ENCODE measurements at regions of chr2 and their contacts with region 1.

Region 1: GRCh38 chr2:8681786-8682692 is at the start of gene ID2:
- DNase-seq: peak; percentile 99
- ATAC-seq: peak; percentile 73
- H3K4me3 Mint-ChIP-seq: peak within 1 kb of the TSS; percentile 98
- H3K27ac Mint-ChIP-seq: peak within 1 kb of the TSS; percentile 97
- H3K4me1 Mint-ChIP-seq: peaks cover 34% of the 10 kb centered on the region
- H3K27me3 Mint-ChIP-seq: peaks cover 10% of the 10 kb centered on the region
- total RNA-seq, gene ID2: 171 to 213 TPM

Region 2: GRCh38 chr2:7427293-7428060 is 1254.6 kb before region 1 on chr2:
- CTCF ChIA-PET with region 1: interaction called, 4 read pairs
- POLR2A ChIA-PET with region 1: no interaction called
- intact Hi-C with region 1: loop called (anchors 1 to 2 kb)
- DNase-seq: no peak
- ATAC-seq: no peak
- H3K4me3 Mint-ChIP-seq: no peak overlapping the region
- H3K27ac Mint-ChIP-seq: peak overlapping the region; percentile 51
- H3K4me1 Mint-ChIP-seq: peaks cover 41% of the 10 kb centered on the region
- H3K27me3 Mint-ChIP-seq: peaks cover 9% of the 10 kb centered on the region

Region 3: GRCh38 chr2:7845332-7845731 is 836.7 kb before region 1 on chr2:
- CTCF ChIA-PET with region 1: no interaction called
- POLR2A ChIA-PET with region 1: interaction called, 7 read pairs
- intact Hi-C with region 1: loop called in 1 of 2 experiments (anchors 1 kb)
- DNase-seq: no peak
- ATAC-seq: no peak
- H3K4me3 Mint-ChIP-seq: no peak overlapping the region
- H3K27ac Mint-ChIP-seq: no peak overlapping the region
- H3K4me1 Mint-ChIP-seq: peaks cover 40% of the 10 kb centered on the region
- H3K27me3 Mint-ChIP-seq: peaks cover 6% of the 10 kb centered on the region

Region 4: DNA sequence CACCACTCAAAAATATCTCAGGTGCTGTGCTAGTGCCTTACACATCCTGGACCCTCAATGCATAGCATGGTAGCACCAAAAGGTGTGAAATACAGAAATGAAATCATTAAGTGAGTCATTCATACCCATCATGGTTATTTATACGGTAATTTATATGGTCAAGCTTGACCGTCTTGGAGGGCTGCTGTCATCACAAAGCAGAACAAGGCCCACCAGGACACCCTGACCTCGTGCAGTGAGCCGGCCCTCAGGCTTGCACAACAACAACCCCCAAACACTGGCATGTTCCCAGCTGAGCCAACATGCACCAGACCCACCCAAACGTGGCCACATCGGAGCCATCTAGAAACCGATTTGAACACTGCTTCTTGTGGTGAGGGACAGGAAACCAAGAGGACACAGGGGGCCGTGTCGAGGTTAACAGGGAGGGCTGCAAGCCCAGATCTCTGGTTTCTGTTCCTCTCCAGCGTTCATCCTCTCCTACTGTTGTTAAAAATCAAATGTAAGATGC is 378.7 kb before region 1 on chr2:
- CTCF ChIA-PET with region 1: no interaction called
- POLR2A ChIA-PET with region 1: no interaction called
- intact Hi-C with region 1: loop called (anchors 2 to 10 kb)
- DNase-seq: peak; percentile 53
- ATAC-seq: peak; percentile 7
- H3K4me3 Mint-ChIP-seq: no peak overlapping the region
- H3K27ac Mint-ChIP-seq: peak overlapping the region; percentile 63
- H3K4me1 Mint-ChIP-seq: peaks cover 51% of the 10 kb centered on the region
- H3K27me3 Mint-ChIP-seq: peaks cover 5% of the 10 kb centered on the region

Region 5: GRCh38 chr2:8544786-8545694 is 137.0 kb before region 1 on chr2:
- CTCF ChIA-PET with region 1: interaction called, 5 read pairs
- POLR2A ChIA-PET with region 1: interaction called, 103 read pairs
- intact Hi-C with region 1: loop called (anchors 1 kb)
- DNase-seq: peak; percentile 96
- ATAC-seq: peak; percentile 66
- H3K4me3 Mint-ChIP-seq: no peak overlapping the region
- H3K27ac Mint-ChIP-seq: peak overlapping the region; percentile 99
- H3K4me1 Mint-ChIP-seq: peaks cover 77% of the 10 kb centered on the region
- H3K27me3 Mint-ChIP-seq: no peaks in the 10 kb centered on the region

Region 6: DNA sequence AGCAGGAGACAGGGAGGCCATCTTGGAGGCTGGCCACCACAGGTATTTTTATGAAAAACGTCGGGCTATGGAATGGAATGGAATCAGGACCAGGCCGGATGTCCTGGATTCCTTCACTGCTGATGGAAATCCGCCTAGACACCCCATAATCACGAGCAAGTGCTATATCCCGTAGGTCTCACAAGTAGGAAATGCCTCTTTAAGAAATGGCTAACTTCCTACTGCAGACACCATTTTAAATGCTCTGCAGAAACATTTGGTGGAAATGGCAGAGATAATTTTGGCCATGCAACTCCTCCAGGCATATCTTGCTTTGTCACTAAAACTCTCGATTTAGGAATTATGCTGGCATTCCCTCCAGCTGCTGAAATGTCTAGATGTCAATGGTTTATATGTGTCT is 17.8 kb after region 1 on chr2:
- CTCF ChIA-PET with region 1: no interaction called
- POLR2A ChIA-PET with region 1: no interaction called
- intact Hi-C with region 1: no loop called
- DNase-seq: no peak
- ATAC-seq: no peak
- H3K4me3 Mint-ChIP-seq: no peak overlapping the region
- H3K27ac Mint-ChIP-seq: no peak overlapping the region
- H3K4me1 Mint-ChIP-seq: no peaks in the 10 kb centered on the region
- H3K27me3 Mint-ChIP-seq: no peaks in the 10 kb centered on the region

Region 7: GRCh38 chr2:8750221-8750620 is 68.2 kb after region 1 on chr2:
- CTCF ChIA-PET with region 1: no interaction called
- POLR2A ChIA-PET with region 1: no interaction called
- intact Hi-C with region 1: no loop called
- DNase-seq: no peak
- ATAC-seq: no peak
- H3K4me3 Mint-ChIP-seq: no peak overlapping the region
- H3K27ac Mint-ChIP-seq: no peak overlapping the region
- H3K4me1 Mint-ChIP-seq: peaks cover 2% of the 10 kb centered on the region
- H3K27me3 Mint-ChIP-seq: no peaks in the 10 kb centered on the region

Region 8: DNA sequence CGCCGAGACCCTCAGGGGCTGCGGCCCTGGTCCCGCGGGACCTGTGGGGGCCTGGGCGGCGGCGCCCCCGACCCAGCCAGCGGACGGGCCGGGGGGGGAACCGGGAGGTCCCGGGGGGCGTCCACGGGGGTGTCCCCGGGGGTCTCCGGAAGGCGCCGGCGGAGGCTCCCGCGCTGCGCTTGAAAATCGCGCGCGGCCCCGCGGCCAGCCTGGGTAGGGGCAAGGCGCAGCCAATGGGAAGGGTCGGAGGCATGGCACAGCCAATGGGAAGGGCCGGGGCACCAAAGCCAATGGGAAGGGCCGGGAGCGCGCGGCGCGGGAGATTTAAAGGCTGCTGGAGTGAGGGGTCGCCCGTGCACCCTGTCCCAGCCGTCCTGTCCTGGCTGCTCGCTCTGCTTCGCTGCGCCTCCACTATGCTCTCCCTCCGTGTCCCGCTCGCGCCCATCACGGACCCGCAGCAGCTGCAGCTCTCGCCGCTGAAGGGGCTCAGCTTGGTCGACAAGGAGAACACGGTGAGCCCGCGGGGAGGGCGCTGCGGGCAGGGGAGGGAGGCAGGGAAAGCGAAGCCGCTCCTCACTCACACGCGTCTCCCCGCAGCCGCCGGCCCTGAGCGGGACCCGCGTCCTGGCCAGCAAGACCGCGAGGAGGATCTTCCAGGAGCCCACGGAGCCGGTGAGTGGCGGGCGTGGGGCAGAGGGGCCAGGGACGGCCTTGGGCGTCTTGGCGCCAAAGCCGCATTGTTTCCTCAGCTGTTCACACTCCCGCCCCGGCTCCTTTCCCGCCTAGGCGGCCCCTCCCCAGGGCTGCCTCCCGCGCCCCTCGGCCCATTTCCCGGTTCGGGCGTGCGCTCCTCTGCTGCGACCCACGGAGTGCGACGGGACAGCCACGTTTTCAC is 1440.6 kb after region 1 on chr2 and contains the start of gene RRM2:
- CTCF ChIA-PET with region 1: no interaction called
- POLR2A ChIA-PET with region 1: no interaction called
- intact Hi-C with region 1: loop called in 1 of 2 experiments (anchors 5 kb)
- DNase-seq: peak; percentile 98
- ATAC-seq: peak; percentile 82
- H3K4me3 Mint-ChIP-seq: peak within 1 kb of the TSS; percentile 97
- H3K27ac Mint-ChIP-seq: peak within 1 kb of the TSS; percentile 98
- H3K4me1 Mint-ChIP-seq: peaks cover 37% of the 10 kb centered on the region
- H3K27me3 Mint-ChIP-seq: no peaks in the 10 kb centered on the region
- total RNA-seq, gene RRM2: 382 to 469 TPM